Panc1 (cell line): ENCODE measurements at regions of chr19 and their contacts with region 1.

Region 1: GRCh38 chr19:40305403-40305802 is 20.3 kb upstream of the AKT2 start:
- DNase-seq: peak; percentile 100
- ATAC-seq: peak; percentile 92
- H3K4me3 ChIP-seq: no peak overlapping the region
- H3K27ac ChIP-seq: no peak overlapping the region
- H3K4me1 ChIP-seq: no peaks in the 10 kb centered on the region
- H3K27me3 ChIP-seq: peaks cover 11% of the 10 kb centered on the region
- CTCF ChIP-seq: no peak

Region 2: DNA sequence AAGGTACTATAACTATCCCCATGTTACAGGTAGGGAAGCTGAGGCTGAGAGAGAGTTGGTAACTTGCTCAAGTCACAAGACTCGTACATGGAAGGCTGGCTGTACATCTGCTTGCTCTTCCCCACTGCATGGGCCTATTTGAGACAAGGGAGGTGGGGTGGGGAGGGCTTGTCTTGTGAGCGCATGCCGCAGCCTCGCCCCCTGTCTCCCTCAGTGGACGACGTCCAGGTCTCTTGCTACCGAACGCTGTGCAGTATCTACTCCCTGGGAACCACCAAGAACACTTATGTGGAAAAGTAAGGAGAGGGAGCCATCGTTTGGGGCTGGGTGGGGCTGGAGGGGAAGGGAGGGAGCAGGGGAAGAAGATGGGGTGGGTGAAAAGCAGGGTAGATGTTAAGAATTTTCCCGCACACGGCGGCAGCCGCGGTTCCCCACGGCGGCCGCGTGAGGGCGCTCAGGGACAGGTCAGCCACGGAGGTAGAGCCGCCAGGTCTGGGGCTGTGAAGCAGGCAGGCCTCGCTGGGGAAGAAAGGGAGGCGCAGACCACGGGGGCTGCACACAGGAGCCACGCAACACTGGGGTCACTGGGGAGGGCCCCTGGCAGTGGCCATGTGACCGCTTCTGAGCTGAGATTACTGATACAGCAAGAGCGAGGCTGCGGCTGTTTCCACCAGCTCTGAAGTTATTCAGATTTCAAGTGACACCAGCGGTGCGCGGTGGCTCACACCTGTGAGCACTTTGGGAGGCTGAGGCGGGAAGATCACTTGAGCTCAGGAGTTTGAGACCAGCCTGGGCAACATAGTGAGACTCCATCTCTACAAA is 1790.4 kb before region 1 on chr19:
- CTCF ChIA-PET with region 1: no interaction called
- POLR2A ChIA-PET with region 1: interaction called, 14 read pairs
- in situ Hi-C with region 1: loop called (anchors 10 kb)
- intact Hi-C with region 1: no loop called
- DNase-seq: peak; percentile 85
- ATAC-seq: peak; percentile 91
- H3K4me3 ChIP-seq: peak overlapping the region in 1 of 2 experiments; percentile 14; a peak in 2 of 4 replicates
- H3K27ac ChIP-seq: 0 out of 2 replicates have a peak overlapping the region, but pooled peaks have one; percentile 2
- H3K4me1 ChIP-seq: peaks cover 4% of the 10 kb centered on the region; the same call in 1 of the 2 replicates
- H3K27me3 ChIP-seq: no peaks in the 10 kb centered on the region
- CTCF ChIP-seq: no peak

Region 3: GRCh38 chr19:39765091-39766076 is 540.0 kb before region 1 on chr19:
- CTCF ChIA-PET with region 1: interaction called, 16 read pairs
- POLR2A ChIA-PET with region 1: no interaction called
- in situ Hi-C with region 1: no loop called
- intact Hi-C with region 1: no loop called
- DNase-seq: peak; percentile 89
- ATAC-seq: peak; percentile 76
- H3K4me3 ChIP-seq: no peak overlapping the region
- H3K27ac ChIP-seq: no peak overlapping the region
- H3K4me1 ChIP-seq: no peaks in the 10 kb centered on the region
- H3K27me3 ChIP-seq: peaks cover 42% of the 10 kb centered on the region
- CTCF ChIP-seq: no peak

Region 4: GRCh38 chr19:40147693-40148347 is 157.6 kb before region 1 on chr19:
- CTCF ChIA-PET with region 1: interaction called, 274 read pairs
- POLR2A ChIA-PET with region 1: interaction called, 4 read pairs
- in situ Hi-C with region 1: no loop called
- intact Hi-C with region 1: no loop called
- DNase-seq: peak; percentile 100
- ATAC-seq: peak; percentile 87
- H3K4me3 ChIP-seq: peak overlapping the region; percentile 24 to 50
- H3K27ac ChIP-seq: peak overlapping the region; percentile 42
- H3K4me1 ChIP-seq: peaks cover 14% of the 10 kb centered on the region
- H3K27me3 ChIP-seq: no peaks in the 10 kb centered on the region
- CTCF ChIP-seq: no peak

Region 5: GRCh38 chr19:40190891-40191835 is 114.2 kb before region 1 on chr19 and contains the start of gene MAP3K10:
- CTCF ChIA-PET with region 1: interaction called, 40 read pairs
- POLR2A ChIA-PET with region 1: interaction called, 7 read pairs
- in situ Hi-C with region 1: no loop called
- intact Hi-C with region 1: no loop called
- DNase-seq: peak; percentile 99
- ATAC-seq: peak; percentile 97
- H3K4me3 ChIP-seq: peak within 1 kb of the TSS; percentile 36 to 57
- H3K27ac ChIP-seq: peak within 1 kb of the TSS; percentile 49
- H3K4me1 ChIP-seq: peaks cover 23% of the 10 kb centered on the region
- H3K27me3 ChIP-seq: peaks cover 9% of the 10 kb centered on the region
- CTCF ChIP-seq: no peak
- total RNA-seq, gene MAP3K10: 255 TPM

Region 6: GRCh38 chr19:40257057-40257517 is 48.3 kb before region 1 on chr19:
- CTCF ChIA-PET with region 1: interaction called, 18 read pairs
- POLR2A ChIA-PET with region 1: interaction called, 20 read pairs
- in situ Hi-C with region 1: loop called (anchors 5 kb)
- intact Hi-C with region 1: no loop called
- DNase-seq: no peak
- ATAC-seq: peak; percentile 51
- H3K4me3 ChIP-seq: no peak overlapping the region
- H3K27ac ChIP-seq: no peak overlapping the region
- H3K4me1 ChIP-seq: peaks cover 12% of the 10 kb centered on the region
- H3K27me3 ChIP-seq: no peaks in the 10 kb centered on the region
- CTCF ChIP-seq: no peak

Region 7: GRCh38 chr19:40322871-40323615 is 17.6 kb after region 1 on chr19:
- CTCF ChIA-PET with region 1: interaction called, 498 read pairs
- POLR2A ChIA-PET with region 1: interaction called, 19 read pairs
- in situ Hi-C with region 1: no loop called
- intact Hi-C with region 1: no loop called
- DNase-seq: no peak
- ATAC-seq: peak; percentile 10
- H3K4me3 ChIP-seq: no peak overlapping the region
- H3K27ac ChIP-seq: no peak overlapping the region
- H3K4me1 ChIP-seq: no peaks in the 10 kb centered on the region
- H3K27me3 ChIP-seq: no peaks in the 10 kb centered on the region
- CTCF ChIP-seq: no peak